Prostate gland (tissue), 2 donors: ENCODE measurements at regions of chr7 and their contacts with region 1.

Region 1: GRCh38 chr7:16918288-16918895 is 36.6 kb upstream of the AGR3 start:
- DNase-seq: peak; percentile 28
- H3K4me3 ChIP-seq: no peak overlapping the region
- H3K27ac ChIP-seq: no peak overlapping the region
- H3K4me1 ChIP-seq: no peaks in the 10 kb centered on the region
- H3K27me3 ChIP-seq: no peaks in the 10 kb centered on the region
- CTCF ChIP-seq: peak; percentile 37 to 90 (median 80)
- POLR2A ChIP-seq: no peak

Region 2: DNA sequence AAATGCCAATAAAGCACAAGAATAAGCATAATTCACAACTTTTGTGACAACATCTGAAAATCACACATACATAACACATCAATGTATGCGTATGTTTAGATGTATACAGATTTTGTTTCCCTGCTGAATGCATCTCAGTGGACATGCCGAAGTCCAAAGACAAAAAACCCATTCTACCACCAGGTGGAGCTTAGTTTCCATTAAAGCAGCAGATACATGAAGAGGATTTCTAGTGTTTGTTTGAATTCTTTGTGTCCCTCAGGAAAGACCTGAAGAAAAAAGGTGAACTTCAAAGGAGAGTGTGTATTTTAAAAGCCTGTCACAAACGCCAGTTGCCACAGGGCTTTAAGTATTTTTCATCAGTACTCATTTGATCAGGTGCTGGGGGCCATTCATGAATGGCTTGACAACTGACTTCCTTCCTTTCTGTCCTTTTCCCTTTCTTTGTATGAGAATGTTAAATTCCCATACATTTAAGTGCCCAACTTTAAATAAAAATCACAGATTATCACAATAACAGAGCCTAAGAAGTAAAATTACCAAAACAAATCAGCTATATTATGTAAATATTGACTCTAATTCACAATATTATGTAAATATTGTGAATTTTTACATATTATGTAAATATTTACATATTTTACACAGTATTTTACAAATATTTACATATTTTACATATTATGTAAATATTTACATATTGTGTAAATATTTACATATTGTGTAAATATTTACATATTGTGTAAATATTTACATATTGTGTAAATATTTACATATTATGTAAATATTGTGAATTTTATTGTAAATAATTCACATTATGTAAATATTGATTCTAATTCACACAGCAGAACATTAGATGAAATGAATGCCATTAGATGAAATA is 840.1 kb before region 1 on chr7:
- intact Hi-C with region 1: loop called (anchors 5 kb)
- DNase-seq: peak; percentile 45
- H3K4me3 ChIP-seq: no peak overlapping the region
- H3K27ac ChIP-seq: no peak overlapping the region
- H3K4me1 ChIP-seq: no peaks in the 10 kb centered on the region
- H3K27me3 ChIP-seq: no peaks in the 10 kb centered on the region
- CTCF ChIP-seq: peak in 3 of 4 experiments; percentile 67 to 74 (median 69)
- POLR2A ChIP-seq: no peak

Region 3: GRCh38 chr7:16604054-16604453 is 314.3 kb before region 1 on chr7:
- intact Hi-C with region 1: loop called (anchors 10 kb)
- DNase-seq: no peak
- H3K4me3 ChIP-seq: no peak overlapping the region
- H3K27ac ChIP-seq: no peak overlapping the region
- H3K4me1 ChIP-seq: no peaks in the 10 kb centered on the region
- H3K27me3 ChIP-seq: no peaks in the 10 kb centered on the region
- CTCF ChIP-seq: peak in 1 of 4 experiments; percentile 9
- POLR2A ChIP-seq: no peak

Region 4: DNA sequence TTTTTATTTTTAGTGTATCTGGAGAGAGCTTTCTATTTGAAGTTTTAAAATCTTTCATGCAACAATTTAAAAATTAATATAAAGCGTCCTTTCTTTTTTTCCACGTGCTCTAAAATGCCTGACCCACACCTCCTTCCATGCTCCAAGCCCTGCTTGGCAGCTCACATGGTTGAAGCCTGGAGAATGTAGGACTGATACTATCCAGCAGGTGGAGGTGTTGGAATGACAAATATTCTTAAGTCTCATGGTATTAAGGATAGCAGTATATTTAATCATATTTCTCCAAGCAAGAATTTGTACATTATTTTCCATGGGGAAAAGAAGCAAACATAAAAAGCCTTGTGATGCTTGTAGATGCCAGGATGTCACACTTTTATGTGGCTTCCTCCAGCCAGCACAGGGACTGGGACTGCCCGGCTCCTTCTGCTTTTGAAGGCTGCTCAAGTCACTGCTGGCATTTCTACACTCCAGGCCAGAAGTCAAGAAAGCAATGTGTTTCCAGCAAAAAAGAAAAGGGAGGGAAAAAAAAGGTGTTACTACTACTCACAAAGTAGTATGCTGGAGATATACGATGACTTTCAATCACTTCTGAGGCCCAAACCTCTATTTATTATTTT is 222.7 kb before region 1 on chr7:
- intact Hi-C with region 1: loop called (anchors 5 kb)
- DNase-seq: peak; percentile 51
- H3K4me3 ChIP-seq: no peak overlapping the region
- H3K27ac ChIP-seq: no peak overlapping the region
- H3K4me1 ChIP-seq: no peaks in the 10 kb centered on the region
- H3K27me3 ChIP-seq: no peaks in the 10 kb centered on the region
- CTCF ChIP-seq: peak in 3 of 4 experiments; percentile 44 to 74 (median 64)
- POLR2A ChIP-seq: no peak

Region 5: GRCh38 chr7:16786257-16786656 is 132.1 kb before region 1 on chr7:
- intact Hi-C with region 1: no loop called
- DNase-seq: no peak
- H3K4me3 ChIP-seq: no peak overlapping the region
- H3K27ac ChIP-seq: no peak overlapping the region
- H3K4me1 ChIP-seq: no peaks in the 10 kb centered on the region
- H3K27me3 ChIP-seq: no peaks in the 10 kb centered on the region
- CTCF ChIP-seq: no peak
- POLR2A ChIP-seq: no peak

Region 6: DNA sequence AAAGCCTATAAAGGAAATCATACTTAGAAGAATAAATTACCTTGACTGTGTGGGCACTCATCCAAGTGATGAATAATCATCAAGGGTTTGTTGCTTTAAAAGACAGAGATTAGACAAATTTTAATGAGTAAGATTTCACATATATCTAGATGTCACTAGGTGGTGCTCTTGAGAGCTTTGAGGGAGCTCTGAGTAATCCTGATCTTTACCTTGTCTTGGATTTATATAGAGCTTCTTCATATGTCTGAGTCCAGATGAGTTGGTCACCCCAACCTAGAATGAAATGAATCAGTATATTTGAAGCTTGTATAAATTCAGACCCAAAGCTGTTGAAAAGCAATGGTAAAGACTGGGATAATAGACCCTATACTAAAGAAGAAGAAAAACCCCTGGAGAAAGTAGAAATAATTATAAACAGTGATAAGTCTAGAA is 117.3 kb before region 1 on chr7:
- intact Hi-C with region 1: loop called (anchors 10 kb)
- DNase-seq: no peak
- H3K4me3 ChIP-seq: no peak overlapping the region
- H3K27ac ChIP-seq: no peak overlapping the region
- H3K4me1 ChIP-seq: no peaks in the 10 kb centered on the region
- H3K27me3 ChIP-seq: no peaks in the 10 kb centered on the region
- CTCF ChIP-seq: peak in 3 of 4 experiments; percentile 21 to 63 (median 49)
- POLR2A ChIP-seq: no peak